PC-3 (cell line): ENCODE measurements at regions of chr7 and their contacts with region 1.

Region 1: DNA sequence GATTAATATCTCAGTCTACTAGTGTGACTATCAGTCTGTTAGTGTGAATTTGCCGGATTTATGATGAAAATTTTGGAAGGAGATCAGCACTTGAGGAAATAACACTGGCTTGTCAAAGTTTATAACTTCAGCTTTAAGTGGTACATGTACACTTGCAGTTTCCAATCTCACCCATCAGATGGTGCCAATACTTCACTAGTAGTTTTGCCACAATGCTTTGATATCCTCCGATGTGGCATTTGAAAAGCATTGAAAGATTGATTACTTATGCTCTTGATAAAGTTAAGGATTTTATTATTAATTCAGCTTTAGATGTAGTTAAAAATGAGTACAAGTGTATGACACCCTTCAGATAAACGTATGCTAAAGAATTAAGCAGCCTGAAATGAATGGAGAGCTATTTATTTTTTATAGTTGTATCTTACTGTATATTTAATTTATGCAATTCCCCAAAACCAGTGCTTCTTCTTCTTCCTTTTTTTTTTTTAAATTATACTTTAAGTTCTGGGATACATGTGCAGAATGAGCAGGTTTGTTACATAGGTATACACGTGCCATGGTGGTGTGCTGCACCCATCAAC is 98.2 kb downstream of the ANLN start:
- DNase-seq: peak; percentile 81
- ATAC-seq: peak; percentile 64
- H3K4me3 ChIP-seq: no peak overlapping the region
- H3K27ac ChIP-seq: no peak overlapping the region
- H3K4me1 ChIP-seq: no peaks in the 10 kb centered on the region
- H3K27me3 ChIP-seq: peaks cover 38% of the 10 kb centered on the region
- CTCF ChIP-seq: peak; percentile 81

Region 2: GRCh38 chr7:36440880-36441279 is 47.0 kb before region 1 on chr7:
- CTCF ChIA-PET with region 1: interaction called, 4 read pairs
- POLR2A ChIA-PET with region 1: no interaction called
- intact Hi-C with region 1: loop called (anchors 5 kb)
- DNase-seq: peak; percentile 38
- ATAC-seq: peak; percentile 55
- H3K4me3 ChIP-seq: no peak overlapping the region
- H3K27ac ChIP-seq: no peak overlapping the region
- H3K4me1 ChIP-seq: no peaks in the 10 kb centered on the region
- H3K27me3 ChIP-seq: no peaks in the 10 kb centered on the region
- CTCF ChIP-seq: peak; percentile 61

Region 3: DNA sequence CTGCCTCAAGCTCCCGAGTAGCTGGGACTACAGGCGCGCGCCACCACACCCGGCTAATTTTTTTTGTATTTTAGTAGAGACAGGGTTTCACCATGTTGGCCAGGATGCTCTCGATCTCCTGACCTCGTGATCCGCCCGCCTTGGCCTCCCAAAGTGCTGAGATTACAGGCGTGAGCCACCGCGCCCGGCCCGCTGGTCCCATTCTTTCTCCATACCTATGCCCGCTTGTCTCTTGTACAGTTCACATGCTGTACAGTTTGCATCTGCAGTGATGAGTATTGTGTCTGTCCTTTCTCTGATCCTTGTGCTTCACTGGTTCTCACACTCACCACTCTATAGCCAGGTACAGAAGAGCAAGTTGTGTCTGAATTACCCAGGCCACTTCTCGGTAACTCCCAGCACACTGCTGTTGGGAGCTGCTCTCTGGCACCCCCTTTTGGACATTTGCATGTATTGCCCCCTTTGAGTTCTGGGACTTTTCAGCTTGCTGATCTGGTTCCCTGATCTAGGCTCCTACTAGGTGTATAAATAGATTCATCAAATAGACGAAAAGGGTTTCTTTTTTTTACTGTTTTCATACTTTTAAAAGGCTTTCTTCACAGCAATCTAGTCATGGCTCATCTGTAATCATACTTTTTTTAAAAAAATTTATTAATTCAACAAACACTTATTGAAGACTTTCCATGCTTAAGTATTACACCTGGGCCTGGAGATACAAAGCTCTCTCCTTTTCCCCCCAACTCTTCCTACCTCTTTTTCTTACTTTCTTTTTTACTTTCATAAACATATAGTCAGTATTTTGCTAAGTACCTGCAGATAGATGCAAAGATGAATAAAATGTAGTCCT is 183.0 kb after region 1 on chr7:
- CTCF ChIA-PET with region 1: interaction called, 5 read pairs
- POLR2A ChIA-PET with region 1: no interaction called
- intact Hi-C with region 1: loop called (anchors 1 kb)
- DNase-seq: peak; percentile 82
- ATAC-seq: peak; percentile 78
- H3K4me3 ChIP-seq: no peak overlapping the region
- H3K27ac ChIP-seq: no peak overlapping the region
- H3K4me1 ChIP-seq: no peaks in the 10 kb centered on the region
- H3K27me3 ChIP-seq: peaks cover 15% of the 10 kb centered on the region; the same call in 1 of the 2 replicates
- CTCF ChIP-seq: peak; percentile 85

Region 4: DNA sequence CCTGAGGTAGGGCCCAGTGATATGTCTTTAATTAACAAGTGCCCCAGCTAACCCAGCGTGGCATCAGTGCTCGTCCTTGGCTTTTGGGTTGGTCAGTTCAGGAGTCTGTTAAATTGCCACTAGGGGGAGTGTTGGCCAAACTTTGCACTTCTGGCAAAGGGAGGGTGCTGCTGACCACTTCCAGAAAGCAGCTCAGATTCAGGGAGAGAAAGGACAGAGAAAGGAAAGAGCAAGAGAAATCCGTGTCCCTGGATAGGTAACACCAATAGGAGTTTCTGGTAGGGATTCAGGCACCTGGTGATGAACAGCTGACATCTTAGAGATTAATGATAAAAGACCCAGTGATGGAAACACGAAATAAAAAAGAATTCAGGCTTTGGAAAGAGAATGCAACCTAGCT is 479.5 kb after region 1 on chr7:
- CTCF ChIA-PET with region 1: no interaction called
- POLR2A ChIA-PET with region 1: no interaction called
- intact Hi-C with region 1: loop called (anchors 1 kb)
- DNase-seq: peak; percentile 70
- ATAC-seq: peak; percentile 99
- H3K4me3 ChIP-seq: no peak overlapping the region
- H3K27ac ChIP-seq: no peak overlapping the region
- H3K4me1 ChIP-seq: no peaks in the 10 kb centered on the region
- H3K27me3 ChIP-seq: 0 out of 2 replicates have a peak, but pooled peaks cover 13% of the 10 kb centered on the region
- CTCF ChIP-seq: peak; percentile 82

Region 5: GRCh38 chr7:37181550-37181932 is 693.7 kb after region 1 on chr7:
- CTCF ChIA-PET with region 1: interaction called, 10 read pairs
- POLR2A ChIA-PET with region 1: no interaction called
- intact Hi-C with region 1: loop called (anchors 1 kb)
- DNase-seq: no peak
- ATAC-seq: no peak
- H3K4me3 ChIP-seq: no peak overlapping the region
- H3K27ac ChIP-seq: no peak overlapping the region
- H3K4me1 ChIP-seq: no peaks in the 10 kb centered on the region
- H3K27me3 ChIP-seq: peaks cover 25% of the 10 kb centered on the region; the same call in 1 of the 2 replicates
- CTCF ChIP-seq: no peak

Region 6: GRCh38 chr7:37201003-37201875 is 713.4 kb after region 1 on chr7:
- CTCF ChIA-PET with region 1: interaction called, 5 read pairs
- POLR2A ChIA-PET with region 1: no interaction called
- intact Hi-C with region 1: loop called (anchors 1 kb)
- DNase-seq: peak; percentile 79
- ATAC-seq: peak; percentile 62; the same call in 1 of the 2 replicates
- H3K4me3 ChIP-seq: no peak overlapping the region
- H3K27ac ChIP-seq: no peak overlapping the region
- H3K4me1 ChIP-seq: no peaks in the 10 kb centered on the region
- H3K27me3 ChIP-seq: 0 out of 2 replicates have a peak, but pooled peaks cover 7% of the 10 kb centered on the region
- CTCF ChIP-seq: peak; percentile 90